ENCODE measurements at regions of chr5 and their contacts with region 1.

Region 1: GRCh38 chr5:96868603-96869371 is 7.5 kb upstream of the ERAP2 start:
- DNase-seq: peak; percentile 39
- H3K4me3 Mint-ChIP-seq: no peak overlapping the region
- H3K27ac Mint-ChIP-seq: peak overlapping the region; percentile 93
- H3K4me1 Mint-ChIP-seq: peaks cover 54% of the 10 kb centered on the region
- H3K27me3 Mint-ChIP-seq: no peaks in the 10 kb centered on the region

Region 2: GRCh38 chr5:95631991-95632675 is 1236.7 kb before region 1 on chr5:
- CTCF ChIA-PET with region 1: no interaction called
- intact Hi-C with region 1: no loop called
- DNase-seq: peak; percentile 89
- H3K4me3 Mint-ChIP-seq: peak overlapping the region; percentile 53
- H3K27ac Mint-ChIP-seq: peak overlapping the region; percentile 94
- H3K4me1 Mint-ChIP-seq: peaks cover 20% of the 10 kb centered on the region
- H3K27me3 Mint-ChIP-seq: no peaks in the 10 kb centered on the region

Region 3: DNA sequence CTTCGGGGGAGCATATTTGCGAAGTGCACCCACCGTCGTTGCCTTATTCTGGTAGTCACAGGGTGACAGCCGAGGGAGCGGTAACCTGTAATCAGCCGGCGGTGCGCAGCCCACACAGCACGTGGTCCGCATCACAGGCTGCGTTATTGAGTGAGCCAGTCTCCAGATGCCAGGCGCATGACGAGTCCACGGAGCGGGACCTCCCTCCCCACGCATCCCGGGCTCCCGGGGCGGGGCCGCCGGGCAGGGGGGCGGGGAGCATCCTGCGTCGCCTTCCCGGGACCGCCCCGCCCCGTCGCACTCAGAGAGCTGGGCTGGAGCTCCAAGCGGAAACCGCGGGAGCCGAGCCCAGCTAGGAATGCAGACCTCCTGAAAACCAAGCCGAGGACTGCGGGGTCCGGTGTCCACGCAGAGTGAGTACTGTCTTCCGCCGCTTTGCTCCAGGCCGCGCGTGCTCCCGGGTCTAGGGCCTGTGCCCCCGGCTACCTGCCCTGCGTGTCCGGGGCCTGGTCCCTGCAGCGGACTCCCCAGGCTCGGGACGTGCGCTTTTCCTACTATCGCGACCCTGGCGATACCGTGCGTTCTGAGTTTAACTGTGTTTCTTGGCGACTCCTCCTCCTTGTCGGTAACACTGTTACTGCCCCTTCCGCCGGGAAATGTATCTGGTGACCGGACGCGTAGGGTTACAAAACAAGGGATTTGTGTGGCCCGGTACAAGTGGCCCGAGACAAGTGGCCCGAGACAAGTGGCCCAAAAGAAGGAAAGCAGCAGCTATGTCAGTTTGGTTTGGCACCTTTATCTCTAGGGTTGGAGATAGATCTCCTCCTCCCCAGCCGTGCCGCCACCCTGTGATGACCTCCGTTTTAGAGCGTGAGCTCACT is 166.0 kb before region 1 on chr5:
- CTCF ChIA-PET with region 1: no interaction called
- intact Hi-C with region 1: loop called (anchors 2 kb)
- DNase-seq: peak; percentile 89
- H3K4me3 Mint-ChIP-seq: peak overlapping the region; percentile 87
- H3K27ac Mint-ChIP-seq: peak overlapping the region; percentile 88
- H3K4me1 Mint-ChIP-seq: peaks cover 47% of the 10 kb centered on the region
- H3K27me3 Mint-ChIP-seq: no peaks in the 10 kb centered on the region

Region 4: DNA sequence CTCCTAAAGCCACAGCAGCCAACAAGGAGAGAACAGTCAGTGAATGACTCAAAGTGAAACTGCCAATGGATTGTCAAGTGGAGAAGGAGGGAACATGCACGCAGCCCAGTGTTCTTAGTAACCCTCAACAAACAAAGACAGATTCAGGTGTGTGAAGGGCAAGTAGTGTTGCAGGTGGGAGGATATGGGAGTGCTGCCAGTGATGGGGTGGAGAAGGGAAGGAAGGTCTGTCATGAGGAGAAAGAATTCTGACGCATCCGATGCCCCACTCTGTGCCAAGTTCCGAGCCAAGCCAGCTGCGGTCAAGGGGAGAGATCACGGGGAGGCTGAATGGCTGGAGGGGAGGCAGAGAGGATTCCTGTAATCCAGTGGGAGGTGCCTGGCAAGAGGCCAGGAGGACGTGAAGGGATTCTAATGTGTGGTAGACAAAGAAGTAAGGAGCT is 150.1 kb before region 1 on chr5:
- CTCF ChIA-PET with region 1: no interaction called
- intact Hi-C with region 1: no loop called
- DNase-seq: no peak
- H3K4me3 Mint-ChIP-seq: no peak overlapping the region
- H3K27ac Mint-ChIP-seq: no peak overlapping the region
- H3K4me1 Mint-ChIP-seq: peaks cover 26% of the 10 kb centered on the region
- H3K27me3 Mint-ChIP-seq: no peaks in the 10 kb centered on the region

Region 5: GRCh38 chr5:96885518-96886338 is 16.9 kb after region 1 on chr5:
- CTCF ChIA-PET with region 1: interaction called, 19 read pairs
- intact Hi-C with region 1: no loop called
- DNase-seq: peak; percentile 61
- H3K4me3 Mint-ChIP-seq: peak overlapping the region; percentile 3
- H3K27ac Mint-ChIP-seq: peak overlapping the region; percentile 88
- H3K4me1 Mint-ChIP-seq: peaks cover 71% of the 10 kb centered on the region
- H3K27me3 Mint-ChIP-seq: no peaks in the 10 kb centered on the region

Region 6: DNA sequence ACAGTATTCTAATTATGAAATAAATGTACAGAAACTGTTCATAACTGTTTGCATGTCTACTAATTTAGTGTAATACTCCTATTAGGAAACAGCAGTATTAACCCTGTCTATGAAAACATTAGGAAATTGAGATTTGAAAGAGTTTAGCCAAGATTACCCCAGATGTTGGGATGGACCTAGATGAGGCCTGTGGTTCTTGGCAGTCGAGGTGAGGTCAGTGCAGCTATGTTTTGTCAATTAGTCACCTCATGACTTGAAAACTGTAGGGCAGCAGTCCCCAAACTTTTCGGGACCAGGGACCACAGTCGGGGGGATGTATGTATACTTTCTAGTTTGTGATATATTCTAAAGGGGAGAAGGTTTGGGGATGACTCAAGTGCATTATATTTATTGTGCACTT is 71.8 kb after region 1 on chr5:
- CTCF ChIA-PET with region 1: interaction called, 13 read pairs
- intact Hi-C with region 1: loop called (anchors 1 kb)
- DNase-seq: no peak
- H3K4me3 Mint-ChIP-seq: no peak overlapping the region
- H3K27ac Mint-ChIP-seq: no peak overlapping the region
- H3K4me1 Mint-ChIP-seq: peaks cover 62% of the 10 kb centered on the region
- H3K27me3 Mint-ChIP-seq: no peaks in the 10 kb centered on the region

Region 7: GRCh38 chr5:97009212-97009898 is 140.6 kb after region 1 on chr5:
- CTCF ChIA-PET with region 1: interaction called, 6 read pairs
- intact Hi-C with region 1: loop called (anchors 1 kb)
- DNase-seq: no peak
- H3K4me3 Mint-ChIP-seq: no peak overlapping the region
- H3K27ac Mint-ChIP-seq: peak overlapping the region; percentile 62
- H3K4me1 Mint-ChIP-seq: peaks cover 18% of the 10 kb centered on the region
- H3K27me3 Mint-ChIP-seq: no peaks in the 10 kb centered on the region

Region 8: GRCh38 chr5:97142521-97143254 is 273.9 kb after region 1 on chr5 and contains the start of gene LIX1:
- CTCF ChIA-PET with region 1: interaction called, 43 read pairs
- intact Hi-C with region 1: loop called (anchors 1 kb)
- DNase-seq: peak; percentile 60
- H3K4me3 Mint-ChIP-seq: no peak within 1 kb of the TSS
- H3K27ac Mint-ChIP-seq: no peak within 1 kb of the TSS
- H3K4me1 Mint-ChIP-seq: no peaks in the 10 kb centered on the region
- H3K27me3 Mint-ChIP-seq: peaks cover 6% of the 10 kb centered on the region
- total RNA-seq, gene LIX1: not detected